Right ventricle myocardium inferior (tissue), 1 donor: ENCODE measurements at regions of chr10 and their contacts with region 1.

Region 1: GRCh38 chr10:14822879-14823755 is 14.7 kb downstream of the CDNF start:
- DNase-seq: no peak
- ATAC-seq: no peak

Region 2: DNA sequence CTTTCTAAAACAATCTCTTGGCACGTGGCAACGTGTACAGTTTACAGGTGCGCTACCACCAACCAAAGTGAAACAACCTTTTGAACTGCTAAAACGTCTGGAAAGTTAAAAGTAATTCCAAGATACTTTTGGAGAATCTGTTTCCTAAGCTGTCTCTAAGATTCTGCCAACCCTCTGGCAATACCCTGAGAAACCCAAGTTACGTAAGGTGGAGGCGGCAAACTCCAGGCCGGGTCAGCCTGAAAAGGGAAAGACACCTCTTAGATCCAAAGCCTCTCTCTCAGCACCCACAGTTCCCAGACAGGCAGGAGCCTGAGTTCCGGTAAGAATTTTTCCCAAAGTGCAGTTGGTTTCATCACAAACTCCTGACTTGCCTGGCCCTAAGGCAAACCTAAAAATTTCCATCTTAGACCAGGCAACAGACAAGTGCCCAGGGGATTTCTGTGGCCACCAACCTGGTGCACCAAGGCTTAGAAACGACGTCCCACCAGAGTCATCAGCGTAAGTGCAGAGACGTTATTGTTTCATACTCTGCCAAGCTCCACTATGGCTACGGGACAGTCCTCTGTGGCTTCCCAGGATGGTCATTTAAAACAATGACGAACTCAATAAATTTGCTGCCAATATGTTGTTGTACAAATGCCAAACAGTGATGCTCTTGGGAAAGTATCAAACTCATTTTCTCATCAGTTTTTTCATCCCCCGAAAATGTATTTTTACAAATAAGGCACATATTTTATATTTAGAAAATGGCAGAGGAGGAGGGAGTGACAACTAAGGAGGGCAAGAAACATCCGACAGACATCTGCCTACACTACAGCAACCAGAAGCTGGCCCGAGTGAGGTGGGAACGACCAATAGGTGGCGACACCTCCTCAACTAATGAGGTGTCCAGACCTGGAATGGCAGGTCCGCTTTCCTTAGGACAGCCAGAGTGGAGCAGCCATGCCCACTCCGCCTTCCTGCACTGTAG is 286.6 kb before region 1 on chr10:
- intact Hi-C with region 1: loop called (anchors 5 kb)
- DNase-seq: peak; percentile 81
- ATAC-seq: peak; percentile 82